CD8-positive, alpha-beta T cell (primary cell): ENCODE measurements at regions of chr17 and their contacts with region 1.

Region 1: GRCh38 chr17:48804925-48805411 is 12.1 kb downstream of the TTLL6 start:
- DNase-seq: peak; percentile 50 to 80 (median 67)
- ATAC-seq: peak; percentile 99
- H3K4me3 ChIP-seq: no peak overlapping the region
- H3K4me3 Mint-ChIP-seq: no peak overlapping the region
- H3K27ac ChIP-seq: no peak overlapping the region
- H3K27ac Mint-ChIP-seq: no peak overlapping the region
- H3K4me1 ChIP-seq: no peaks in the 10 kb centered on the region
- H3K4me1 Mint-ChIP-seq: no peaks in the 10 kb centered on the region
- H3K27me3 ChIP-seq: no peaks in the 10 kb centered on the region
- H3K27me3 Mint-ChIP-seq: peaks cover 14% of the 10 kb centered on the region
- CTCF ChIP-seq: peak; percentile 87

Region 2: GRCh38 chr17:48202959-48203358 is 602.0 kb before region 1 on chr17:
- CTCF ChIA-PET with region 1: no interaction called
- POLR2A ChIA-PET with region 1: no interaction called
- intact Hi-C with region 1: no loop called
- DNase-seq: no peak
- ATAC-seq: no peak
- H3K4me3 ChIP-seq: no peak overlapping the region
- H3K4me3 Mint-ChIP-seq: no peak overlapping the region
- H3K27ac ChIP-seq: no peak overlapping the region
- H3K27ac Mint-ChIP-seq: no peak overlapping the region
- H3K4me1 ChIP-seq: no peaks in the 10 kb centered on the region
- H3K4me1 Mint-ChIP-seq: peaks cover 42% of the 10 kb centered on the region
- H3K27me3 ChIP-seq: no peaks in the 10 kb centered on the region
- H3K27me3 Mint-ChIP-seq: no peaks in the 10 kb centered on the region
- CTCF ChIP-seq: no peak

Region 3: DNA sequence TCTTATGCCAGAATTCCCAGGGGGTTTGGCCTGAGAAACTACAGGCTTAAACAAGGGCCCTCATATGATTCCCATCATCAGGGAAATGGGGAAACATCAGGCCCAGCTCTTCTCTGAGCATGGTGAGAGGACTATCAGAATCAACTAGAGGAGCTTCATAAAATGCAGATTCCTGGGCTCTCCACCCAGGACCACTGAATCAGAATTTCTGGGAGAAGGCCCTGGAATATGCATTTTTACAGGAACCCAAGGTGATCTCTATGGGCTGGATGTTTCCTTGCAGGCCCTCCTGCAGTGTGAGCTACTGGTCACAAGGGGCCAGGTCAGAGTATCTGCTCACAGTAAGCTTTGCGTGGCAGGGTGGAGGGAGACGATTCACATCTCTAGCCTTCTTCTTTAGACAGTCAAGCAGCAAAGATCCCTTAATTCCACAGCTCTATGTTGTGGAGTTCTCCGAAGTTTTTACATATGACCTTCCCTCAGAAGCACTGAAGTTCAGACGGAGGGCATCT is 37.6 kb before region 1 on chr17:
- CTCF ChIA-PET with region 1: no interaction called
- POLR2A ChIA-PET with region 1: no interaction called
- intact Hi-C with region 1: no loop called
- DNase-seq: no peak
- ATAC-seq: no peak
- H3K4me3 ChIP-seq: no peak overlapping the region
- H3K4me3 Mint-ChIP-seq: no peak overlapping the region
- H3K27ac ChIP-seq: no peak overlapping the region
- H3K27ac Mint-ChIP-seq: no peak overlapping the region
- H3K4me1 ChIP-seq: no peaks in the 10 kb centered on the region
- H3K4me1 Mint-ChIP-seq: no peaks in the 10 kb centered on the region
- H3K27me3 ChIP-seq: peaks cover 0 to 2% of the 10 kb centered on the region in 2 experiments
- H3K27me3 Mint-ChIP-seq: peaks cover 49% of the 10 kb centered on the region
- CTCF ChIP-seq: no peak

Region 4: DNA sequence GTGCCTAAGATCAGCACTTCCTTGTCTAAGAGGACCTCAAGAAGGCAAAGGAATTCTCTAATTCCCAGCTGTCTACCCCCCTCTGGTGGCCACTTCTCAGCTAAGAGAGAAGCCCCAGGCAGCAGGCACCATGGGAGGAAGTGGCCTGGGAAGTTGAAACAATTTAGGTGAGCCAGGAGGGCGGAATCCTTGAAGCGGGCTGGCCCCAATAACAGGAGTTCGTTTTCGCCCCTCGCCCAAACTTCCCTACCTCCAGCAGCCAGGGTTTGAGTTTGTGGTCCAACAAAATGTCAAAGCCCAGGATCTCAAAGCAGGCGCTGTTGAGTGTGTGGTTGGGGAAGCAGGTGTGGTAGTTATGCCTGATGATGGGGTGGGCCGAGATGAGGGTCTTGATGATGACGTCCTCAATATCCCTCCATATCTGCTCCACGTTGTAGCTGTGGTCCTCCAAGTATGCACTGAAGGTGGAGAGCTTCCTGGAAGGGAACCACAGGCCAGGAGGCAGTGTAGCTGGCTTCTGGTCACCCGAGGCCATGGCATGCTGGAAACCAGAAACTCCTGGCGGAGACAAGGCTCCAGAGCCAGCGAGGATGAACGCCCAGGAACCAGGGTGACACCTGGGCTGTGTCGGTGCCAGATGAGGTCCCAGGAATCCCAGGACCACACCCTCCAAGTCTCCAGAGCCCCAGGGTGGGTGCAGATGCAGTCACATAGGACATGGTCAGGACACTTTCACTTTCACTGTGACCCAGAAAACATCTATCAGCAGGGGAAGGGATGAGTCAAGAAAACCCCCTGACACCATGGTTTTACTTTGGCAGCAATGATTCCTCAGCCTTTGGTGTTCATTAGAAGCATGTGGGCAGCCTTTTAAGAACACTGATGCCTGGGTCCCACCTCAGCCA is 13.6 kb before region 1 on chr17:
- CTCF ChIA-PET with region 1: interaction called, 15 read pairs
- POLR2A ChIA-PET with region 1: no interaction called
- intact Hi-C with region 1: no loop called
- DNase-seq: peak in 4 of 9 experiments; percentile 16 to 49 (median 24)
- ATAC-seq: no peak
- H3K4me3 ChIP-seq: no peak overlapping the region
- H3K4me3 Mint-ChIP-seq: no peak overlapping the region
- H3K27ac ChIP-seq: no peak overlapping the region
- H3K27ac Mint-ChIP-seq: no peak overlapping the region
- H3K4me1 ChIP-seq: peaks cover 8% of the 10 kb centered on the region
- H3K4me1 Mint-ChIP-seq: peaks cover 3% of the 10 kb centered on the region
- H3K27me3 ChIP-seq: peaks cover 2 to 3% of the 10 kb centered on the region in 2 experiments
- H3K27me3 Mint-ChIP-seq: peaks cover 43% of the 10 kb centered on the region
- CTCF ChIP-seq: no peak

Region 5: GRCh38 chr17:48816774-48817590 is 12.0 kb after region 1 on chr17 and contains the start of gene TTLL6:
- CTCF ChIA-PET with region 1: interaction called, 34 read pairs
- POLR2A ChIA-PET with region 1: no interaction called
- intact Hi-C with region 1: no loop called
- DNase-seq: peak; percentile 47 to 89 (median 74)
- ATAC-seq: peak; percentile 99
- H3K4me3 ChIP-seq: peak within 1 kb of the TSS; percentile 39 to 66
- H3K4me3 Mint-ChIP-seq: peak within 1 kb of the TSS; percentile 81
- H3K27ac ChIP-seq: no peak within 1 kb of the TSS
- H3K27ac Mint-ChIP-seq: no peak within 1 kb of the TSS
- H3K4me1 ChIP-seq: peaks cover 11% of the 10 kb centered on the region
- H3K4me1 Mint-ChIP-seq: peaks cover 11% of the 10 kb centered on the region
- H3K27me3 ChIP-seq: peaks cover 17 to 20% of the 10 kb centered on the region in 2 experiments
- H3K27me3 Mint-ChIP-seq: peaks cover 40% of the 10 kb centered on the region
- CTCF ChIP-seq: no peak
- total RNA-seq, gene TTLL6: not detected

Region 6: GRCh38 chr17:48860034-48860433 is 55.1 kb after region 1 on chr17:
- CTCF ChIA-PET with region 1: interaction called, 15 read pairs
- POLR2A ChIA-PET with region 1: no interaction called
- intact Hi-C with region 1: no loop called
- DNase-seq: no peak
- ATAC-seq: no peak
- H3K4me3 ChIP-seq: no peak overlapping the region
- H3K4me3 Mint-ChIP-seq: no peak overlapping the region
- H3K27ac ChIP-seq: no peak overlapping the region
- H3K27ac Mint-ChIP-seq: no peak overlapping the region
- H3K4me1 ChIP-seq: no peaks in the 10 kb centered on the region
- H3K4me1 Mint-ChIP-seq: no peaks in the 10 kb centered on the region
- H3K27me3 ChIP-seq: no peaks in the 10 kb centered on the region
- H3K27me3 Mint-ChIP-seq: no peaks in the 10 kb centered on the region
- CTCF ChIP-seq: no peak

Region 7: GRCh38 chr17:48871551-48872351 is 66.8 kb after region 1 on chr17:
- CTCF ChIA-PET with region 1: interaction called, 706 read pairs
- POLR2A ChIA-PET with region 1: interaction called, 5 read pairs
- intact Hi-C with region 1: no loop called
- DNase-seq: no peak
- ATAC-seq: no peak
- H3K4me3 ChIP-seq: no peak overlapping the region
- H3K4me3 Mint-ChIP-seq: no peak overlapping the region
- H3K27ac ChIP-seq: no peak overlapping the region
- H3K27ac Mint-ChIP-seq: no peak overlapping the region
- H3K4me1 ChIP-seq: no peaks in the 10 kb centered on the region
- H3K4me1 Mint-ChIP-seq: no peaks in the 10 kb centered on the region
- H3K27me3 ChIP-seq: no peaks in the 10 kb centered on the region
- H3K27me3 Mint-ChIP-seq: peaks cover 9% of the 10 kb centered on the region
- CTCF ChIP-seq: no peak

Region 8: DNA sequence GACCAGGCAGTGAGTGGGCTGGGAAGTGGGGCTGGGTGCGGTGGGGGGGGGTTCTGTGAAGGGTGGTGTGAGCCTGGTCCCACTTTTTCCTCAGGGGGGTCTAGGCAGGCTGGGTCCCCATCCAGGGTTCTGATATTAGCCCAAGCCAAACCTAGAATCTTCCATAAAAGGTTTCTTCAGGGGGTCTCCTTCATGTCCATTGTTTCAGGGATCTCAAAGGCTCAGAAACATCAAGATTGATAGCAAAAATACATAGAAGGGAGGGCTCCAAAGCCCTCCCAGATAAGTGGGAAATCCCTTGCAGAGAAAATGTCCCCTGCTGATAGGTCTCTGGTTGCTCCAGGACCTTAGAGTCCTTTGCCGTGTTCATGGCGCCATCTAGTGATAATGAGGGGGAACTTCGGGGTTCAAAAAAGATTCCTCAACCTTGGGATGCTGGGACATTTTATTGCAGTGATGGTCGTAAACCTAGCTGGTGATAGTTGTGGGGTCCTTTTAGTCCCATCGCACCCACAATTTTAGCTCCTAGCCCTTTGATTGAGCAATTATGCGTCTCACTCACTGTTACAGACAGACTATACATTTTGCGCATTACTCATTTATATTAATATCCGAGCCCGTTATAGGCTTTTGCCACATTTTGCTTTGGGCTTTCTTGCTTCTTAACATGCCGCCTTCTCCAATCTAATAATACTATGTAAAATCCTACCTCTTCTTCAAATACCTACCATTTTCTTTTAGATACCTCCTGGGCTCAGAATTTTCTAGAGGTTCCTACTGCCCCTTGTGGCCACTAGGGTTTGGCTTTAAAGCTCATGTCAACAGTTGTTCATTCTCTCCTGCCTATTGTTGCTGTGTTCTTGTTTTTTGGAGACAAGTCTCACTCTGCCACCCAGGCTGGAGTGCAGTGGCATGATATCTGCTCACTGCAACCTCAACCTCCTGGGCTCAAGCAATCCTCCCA is 227.3 kb after region 1 on chr17:
- CTCF ChIA-PET with region 1: interaction called, 12 read pairs
- POLR2A ChIA-PET with region 1: no interaction called
- intact Hi-C with region 1: loop called in 1 of 2 experiments (anchors 1 kb)
- DNase-seq: peak in 8 of 9 experiments; percentile 3 to 72 (median 34)
- ATAC-seq: peak; percentile 82
- H3K4me3 ChIP-seq: no peak overlapping the region
- H3K4me3 Mint-ChIP-seq: no peak overlapping the region
- H3K27ac ChIP-seq: no peak overlapping the region
- H3K27ac Mint-ChIP-seq: no peak overlapping the region
- H3K4me1 ChIP-seq: no peaks in the 10 kb centered on the region
- H3K4me1 Mint-ChIP-seq: peaks cover 3% of the 10 kb centered on the region
- H3K27me3 ChIP-seq: peaks cover 0 to 2% of the 10 kb centered on the region in 2 experiments
- H3K27me3 Mint-ChIP-seq: peaks cover 13% of the 10 kb centered on the region
- CTCF ChIP-seq: peak; percentile 84